ENCODE measurements at regions of chr16 and their contacts with region 1.

Region 1: GRCh38 chr16:71610936-71611871 is 14.8 kb upstream of the MARVELD3 start:
- DNase-seq: no peak
- H3K4me3 ChIP-seq: no peak overlapping the region
- CTCF ChIP-seq: peak; percentile 93

Region 2: DNA sequence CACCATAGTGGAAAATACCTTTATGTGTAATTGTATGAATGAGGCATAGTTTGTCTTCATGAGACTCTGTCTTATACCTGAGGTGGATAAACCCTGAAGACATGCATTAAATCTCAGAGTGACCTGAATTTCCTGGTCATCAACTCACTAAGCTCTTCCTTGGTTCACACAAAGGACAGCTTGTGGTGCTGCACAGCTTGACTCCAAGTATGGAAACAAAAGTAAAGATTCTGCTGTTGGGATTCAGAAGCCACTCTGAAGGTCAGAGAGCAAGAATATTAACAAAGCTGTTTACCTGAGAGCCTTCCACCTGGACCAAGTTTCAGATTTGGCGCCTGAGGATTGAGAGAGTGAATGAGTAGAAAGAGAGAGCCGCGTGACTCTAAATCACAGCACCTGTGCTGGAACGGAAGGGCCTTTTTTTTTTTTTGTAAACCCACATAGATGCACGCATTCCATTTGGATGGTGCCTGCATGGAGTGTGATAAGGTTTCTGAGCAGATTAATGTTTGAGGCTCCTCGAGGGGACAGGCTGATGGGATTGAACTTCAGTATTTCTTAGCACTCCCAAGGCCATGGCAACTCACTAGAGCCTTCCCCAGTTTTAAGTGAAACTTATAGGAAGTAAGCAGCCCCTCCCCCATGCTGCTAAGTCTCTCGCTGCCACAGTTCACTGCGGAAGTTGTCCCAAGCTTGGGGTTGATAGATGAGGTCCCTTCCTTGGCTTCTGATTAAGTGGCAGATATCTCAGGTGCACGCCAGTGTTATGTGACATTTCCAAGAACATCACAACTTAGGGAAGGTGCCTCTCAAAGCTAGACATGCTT is 223.9 kb before region 1 on chr16:
- CTCF ChIA-PET with region 1: no interaction called
- POLR2A ChIA-PET with region 1: no interaction called
- DNase-seq: no peak
- H3K4me3 ChIP-seq: no peak overlapping the region
- CTCF ChIP-seq: no peak

Region 3: GRCh38 chr16:71499775-71500364 is 111.3 kb before region 1 on chr16:
- CTCF ChIA-PET with region 1: interaction called, 15 read pairs
- POLR2A ChIA-PET with region 1: no interaction called
- DNase-seq: no peak
- H3K4me3 ChIP-seq: no peak overlapping the region
- CTCF ChIP-seq: peak; percentile 63

Region 4: GRCh38 chr16:71570143-71570542 is 41.1 kb before region 1 on chr16:
- CTCF ChIA-PET with region 1: interaction called, 22 read pairs
- POLR2A ChIA-PET with region 1: no interaction called
- DNase-seq: no peak
- H3K4me3 ChIP-seq: no peak overlapping the region
- CTCF ChIP-seq: no peak

Region 5: GRCh38 chr16:71590584-71590983 is 20.6 kb before region 1 on chr16:
- CTCF ChIA-PET with region 1: interaction called, 22 read pairs
- POLR2A ChIA-PET with region 1: no interaction called
- DNase-seq: no peak
- H3K4me3 ChIP-seq: no peak overlapping the region
- CTCF ChIP-seq: no peak

Region 6: DNA sequence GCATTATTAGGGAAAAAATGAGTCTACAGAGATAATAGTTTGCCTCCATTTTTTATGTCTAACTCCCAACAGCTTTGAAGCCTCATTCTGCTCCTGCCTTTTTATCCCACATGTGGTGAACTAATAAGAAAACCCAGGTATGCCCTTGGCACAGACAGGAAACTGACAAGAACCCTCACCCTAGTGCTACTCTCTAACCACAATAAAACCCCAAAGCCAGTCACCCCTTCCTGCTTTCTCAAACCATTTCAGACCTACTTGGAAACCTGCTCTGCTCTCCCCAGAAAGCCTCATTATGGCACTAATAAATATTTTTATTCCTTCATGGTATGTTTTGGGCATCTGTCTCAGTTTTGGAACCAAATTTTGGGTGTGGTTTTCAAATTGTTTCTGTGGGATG is 10.9 kb after region 1 on chr16:
- CTCF ChIA-PET with region 1: interaction called, 43 read pairs
- POLR2A ChIA-PET with region 1: no interaction called
- DNase-seq: no peak
- H3K4me3 ChIP-seq: no peak overlapping the region
- CTCF ChIP-seq: no peak

Region 7: DNA sequence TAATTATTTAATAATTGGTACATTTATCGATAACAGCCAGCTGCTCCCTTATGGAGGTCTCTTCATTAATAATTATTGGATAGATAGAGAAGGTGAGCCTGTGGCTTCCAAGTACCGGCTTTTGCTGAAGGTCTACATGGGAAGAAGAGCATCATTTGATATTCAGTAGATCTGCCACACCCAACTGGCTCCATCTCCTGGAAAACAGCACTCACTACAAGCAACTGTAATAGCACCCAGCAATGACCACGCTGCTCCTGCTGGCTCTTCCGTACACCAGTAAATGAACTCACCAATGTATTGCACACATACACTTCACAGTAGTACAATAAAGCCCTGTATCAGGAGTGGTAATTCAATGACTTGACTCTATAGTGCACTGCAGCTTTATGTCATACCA is 34.2 kb after region 1 on chr16:
- CTCF ChIA-PET with region 1: interaction called, 14 read pairs
- POLR2A ChIA-PET with region 1: no interaction called
- DNase-seq: no peak
- H3K4me3 ChIP-seq: no peak overlapping the region
- CTCF ChIP-seq: peak; percentile 37